Activated T-helper 2 cell treated with anti-CD3 and anti-CD28 coated beads, Interferon-gamma antibody, Interleukin-2, Interleukin-4, amounts not matched to agents 10 μg/mL and 5 μg/mL and 100 μg/mL, durations not matched to agents 14 hours and 24 hours and 36 hours (primary cell): ENCODE measurements at regions of chr4 and their contacts with region 1.

Region 1: GRCh38 chr4:2468445-2469192 is at the start of gene RNF4:
- DNase-seq: peak; percentile 96
- H3K4me3 Mint-ChIP-seq: peak within 1 kb of the TSS; percentile 92
- H3K27ac Mint-ChIP-seq: peak within 1 kb of the TSS; percentile 96
- H3K4me1 Mint-ChIP-seq: peaks cover 28% of the 10 kb centered on the region
- H3K27me3 Mint-ChIP-seq: peaks cover 4% of the 10 kb centered on the region
- total RNA-seq, gene RNF4: 99.0 and 99.1 TPM in 2 replicates

Region 2: GRCh38 chr4:2008875-2009703 is 459.5 kb before region 1 on chr4 and contains the start of gene NELFA:
- intact Hi-C with region 1: loop called (anchors 10 kb)
- DNase-seq: peak; percentile 92
- H3K4me3 Mint-ChIP-seq: peak within 1 kb of the TSS; percentile 90
- H3K27ac Mint-ChIP-seq: peak within 1 kb of the TSS; percentile 86
- H3K4me1 Mint-ChIP-seq: peaks cover 29% of the 10 kb centered on the region
- H3K27me3 Mint-ChIP-seq: peaks cover 6% of the 10 kb centered on the region
- total RNA-seq, gene NELFA: 48.3 and 49.4 TPM in 2 replicates

Region 3: GRCh38 chr4:2262143-2262943 is 206.3 kb before region 1 on chr4:
- intact Hi-C with region 1: loop called (anchors 2 kb)
- DNase-seq: peak; percentile 98
- H3K4me3 Mint-ChIP-seq: peak overlapping the region; percentile 69
- H3K27ac Mint-ChIP-seq: peak overlapping the region; percentile 81
- H3K4me1 Mint-ChIP-seq: no peaks in the 10 kb centered on the region
- H3K27me3 Mint-ChIP-seq: no peaks in the 10 kb centered on the region

Region 4: GRCh38 chr4:2484993-2485392 is 16.4 kb after region 1 on chr4:
- intact Hi-C with region 1: loop called (anchors 2 kb)
- DNase-seq: peak; percentile 67
- H3K4me3 Mint-ChIP-seq: peak overlapping the region; percentile 59
- H3K27ac Mint-ChIP-seq: peak overlapping the region; percentile 67
- H3K4me1 Mint-ChIP-seq: peaks cover 66% of the 10 kb centered on the region
- H3K27me3 Mint-ChIP-seq: no peaks in the 10 kb centered on the region

Region 5: GRCh38 chr4:2745981-2746806 is 277.6 kb after region 1 on chr4:
- intact Hi-C with region 1: loop called (anchors 2 kb)
- DNase-seq: peak; percentile 84
- H3K4me3 Mint-ChIP-seq: peak overlapping the region; percentile 63
- H3K27ac Mint-ChIP-seq: peak overlapping the region; percentile 98
- H3K4me1 Mint-ChIP-seq: peaks cover 53% of the 10 kb centered on the region
- H3K27me3 Mint-ChIP-seq: no peaks in the 10 kb centered on the region